GM12878 (cell line): ENCODE measurements at regions of chr6 and their contacts with region 1.

Region 1: GRCh38 chr6:166313255-166314070 is 5.3 kb upstream of the PRR18 start:
- DNase-seq: peak; percentile 44
- ATAC-seq: peak; percentile 97
- H3K4me3 ChIP-seq: no peak overlapping the region
- H3K27ac ChIP-seq: no peak overlapping the region
- H3K4me1 ChIP-seq: no peaks in the 10 kb centered on the region
- H3K27me3 ChIP-seq: no peaks in the 10 kb centered on the region; a peak in 1 of 4 replicates
- CTCF ChIP-seq: peak; percentile 90 to 91 (median 91)
- EP300 ChIP-seq: no peak
- POLR2A ChIP-seq: no peak
- RAD21 ChIP-seq: peak; percentile 91

Region 2: GRCh38 chr6:166192136-166192535 is 121.3 kb before region 1 on chr6:
- CTCF ChIA-PET with region 1: no interaction called
- POLR2A ChIA-PET with region 1: no interaction called
- RAD21 ChIA-PET with region 1: no interaction called
- SMC1A ChIA-PET with region 1: no interaction called
- in situ Hi-C with region 1: no loop called
- intact Hi-C with region 1: no loop called
- DNase-seq: no peak
- ATAC-seq: no peak
- H3K4me3 ChIP-seq: no peak overlapping the region
- H3K27ac ChIP-seq: no peak overlapping the region
- H3K4me1 ChIP-seq: no peaks in the 10 kb centered on the region
- H3K27me3 ChIP-seq: no peaks in the 10 kb centered on the region
- CTCF ChIP-seq: no peak
- EP300 ChIP-seq: no peak
- POLR2A ChIP-seq: no peak
- RAD21 ChIP-seq: no peak

Region 3: GRCh38 chr6:166281104-166281503 is 32.4 kb before region 1 on chr6:
- CTCF ChIA-PET with region 1: interaction called, 58 read pairs
- POLR2A ChIA-PET with region 1: interaction called, 8 read pairs
- RAD21 ChIA-PET with region 1: interaction called, 60 read pairs
- SMC1A ChIA-PET with region 1: interaction called, 29 read pairs
- in situ Hi-C with region 1: loop called (anchors 5 kb)
- intact Hi-C with region 1: loop called (anchors 1 kb)
- DNase-seq: no peak
- ATAC-seq: peak; percentile 67
- H3K4me3 ChIP-seq: no peak overlapping the region
- H3K27ac ChIP-seq: peak overlapping the region; percentile 48
- H3K4me1 ChIP-seq: peaks cover 38% of the 10 kb centered on the region
- H3K27me3 ChIP-seq: no peaks in the 10 kb centered on the region
- CTCF ChIP-seq: no peak
- EP300 ChIP-seq: no peak
- POLR2A ChIP-seq: no peak
- RAD21 ChIP-seq: no peak

Region 4: DNA sequence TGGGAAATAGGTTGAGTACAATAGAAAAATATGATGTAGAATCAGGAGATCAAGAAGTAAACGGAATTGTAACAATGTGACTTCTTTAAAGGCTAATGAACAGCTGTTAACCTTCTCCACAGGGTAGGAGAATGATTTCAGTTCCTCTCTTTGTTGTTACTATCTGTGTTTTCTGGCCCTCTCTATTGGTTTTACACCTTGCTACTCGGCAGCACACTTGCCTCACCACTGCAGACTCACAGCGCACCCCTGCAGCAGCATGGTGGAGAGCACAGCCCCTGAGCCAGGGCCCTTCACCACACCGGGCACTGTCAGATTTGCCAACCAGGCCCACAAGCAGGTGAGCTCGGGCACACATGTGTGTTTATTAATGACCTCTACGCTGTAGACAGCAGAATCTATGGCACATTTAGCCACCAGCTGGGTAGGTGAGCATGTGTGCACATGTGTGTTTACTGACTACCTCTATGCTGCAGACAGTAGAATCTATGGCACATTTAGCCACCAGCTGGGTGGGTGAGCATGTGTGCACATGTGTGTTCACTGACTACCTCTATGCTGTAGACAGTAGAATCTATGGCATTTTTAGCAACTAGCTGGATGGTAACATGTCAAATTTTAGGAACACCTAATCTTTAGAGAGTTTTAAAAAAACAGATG is 12.1 kb after region 1 on chr6:
- CTCF ChIA-PET with region 1: interaction called, 44 read pairs
- POLR2A ChIA-PET with region 1: interaction called, 7 read pairs
- RAD21 ChIA-PET with region 1: interaction called, 30 read pairs
- SMC1A ChIA-PET with region 1: interaction called, 26 read pairs
- in situ Hi-C with region 1: no loop called
- intact Hi-C with region 1: no loop called
- DNase-seq: peak; percentile 43
- ATAC-seq: peak; percentile 96
- H3K4me3 ChIP-seq: no peak overlapping the region
- H3K27ac ChIP-seq: peak overlapping the region; percentile 4; the same call in 1 of the 2 replicates
- H3K4me1 ChIP-seq: peaks cover 11% of the 10 kb centered on the region
- H3K27me3 ChIP-seq: no peaks in the 10 kb centered on the region
- CTCF ChIP-seq: no peak; a peak in 1 of 6 replicates
- EP300 ChIP-seq: peak; percentile 60 to 84; a peak in 3 of 4 replicates
- POLR2A ChIP-seq: no peak
- RAD21 ChIP-seq: no peak

Region 5: DNA sequence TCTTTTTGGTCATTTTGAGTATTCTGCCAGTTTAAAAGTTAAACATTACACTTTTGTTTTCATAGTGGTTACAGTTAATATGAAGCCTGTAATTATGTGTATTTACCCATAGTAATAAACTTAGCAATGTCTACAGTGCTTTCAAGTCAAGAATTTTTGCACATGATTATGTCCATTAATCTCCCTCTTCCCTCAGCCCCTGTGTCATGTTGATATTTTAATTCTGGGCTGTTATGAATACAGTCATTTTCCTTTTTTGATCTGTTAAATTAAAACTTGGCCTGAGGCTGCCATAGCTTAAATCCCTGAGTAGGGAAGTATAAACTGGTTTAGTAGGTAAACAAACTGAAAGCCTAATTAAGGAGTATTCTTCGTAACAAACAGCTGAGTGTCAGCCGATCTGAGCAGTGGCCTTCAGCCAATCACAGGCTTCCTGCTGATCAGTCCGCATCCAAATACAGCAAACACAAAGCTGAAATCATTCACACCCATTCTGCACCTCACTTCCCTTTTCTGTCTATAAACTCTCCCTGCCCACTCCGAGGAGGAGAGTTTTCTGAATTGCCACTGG is 38.3 kb after region 1 on chr6:
- CTCF ChIA-PET with region 1: interaction called, 7 read pairs
- POLR2A ChIA-PET with region 1: no interaction called
- RAD21 ChIA-PET with region 1: interaction called, 3 read pairs
- SMC1A ChIA-PET with region 1: interaction called, 10 read pairs
- in situ Hi-C with region 1: no loop called
- intact Hi-C with region 1: no loop called
- DNase-seq: peak; percentile 75
- ATAC-seq: peak; percentile 100
- H3K4me3 ChIP-seq: no peak overlapping the region
- H3K27ac ChIP-seq: no peak overlapping the region
- H3K4me1 ChIP-seq: peaks cover 4% of the 10 kb centered on the region
- H3K27me3 ChIP-seq: no peaks in the 10 kb centered on the region
- CTCF ChIP-seq: no peak
- EP300 ChIP-seq: 0 out of 4 replicates have a peak, but pooled peaks of 1 of the 2 experiments have one; percentile 29
- POLR2A ChIP-seq: no peak
- RAD21 ChIP-seq: no peak

Region 6: DNA sequence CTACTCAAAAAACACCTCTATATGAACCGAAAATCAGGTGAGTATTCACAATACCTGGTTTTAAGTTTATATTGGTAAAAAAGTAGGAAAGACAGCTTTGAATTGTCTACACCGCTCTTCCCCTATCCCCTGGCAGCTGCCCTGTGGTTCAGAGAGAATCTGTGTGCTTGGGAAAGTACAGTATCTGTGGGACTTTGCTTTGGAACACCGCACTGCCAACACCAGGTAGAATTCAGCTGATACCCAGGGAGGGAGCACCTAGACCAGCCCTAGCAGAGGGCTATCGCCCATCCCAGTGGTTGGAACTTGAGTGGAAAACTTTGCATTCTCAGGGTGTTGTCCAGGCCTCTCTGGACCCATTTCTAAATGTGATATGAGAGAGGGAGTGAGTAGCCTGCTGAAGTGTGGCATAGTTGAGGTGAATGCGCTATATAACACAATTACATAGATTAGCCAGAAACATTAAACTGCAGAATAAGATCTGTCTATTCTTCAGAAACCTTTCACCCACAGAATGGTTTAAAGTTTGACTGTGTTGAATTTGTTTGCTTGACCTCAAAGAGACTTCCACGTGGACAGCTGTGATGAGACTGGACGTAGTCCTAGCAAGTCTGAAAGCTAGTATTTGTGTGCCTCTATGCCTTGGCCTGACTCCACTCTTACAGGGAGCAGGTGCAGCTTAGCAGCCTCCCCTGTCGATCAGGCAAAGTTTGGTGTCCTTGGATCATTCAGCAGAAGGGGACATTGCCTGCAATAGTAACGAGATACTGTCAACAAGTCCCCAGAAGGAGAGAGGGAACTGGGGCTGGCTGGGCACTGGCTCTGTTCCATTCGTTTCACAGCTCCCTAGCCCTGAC is 80.8 kb after region 1 on chr6:
- CTCF ChIA-PET with region 1: interaction called, 317 read pairs
- POLR2A ChIA-PET with region 1: interaction called, 6 read pairs
- RAD21 ChIA-PET with region 1: interaction called, 165 read pairs
- SMC1A ChIA-PET with region 1: interaction called, 72 read pairs
- in situ Hi-C with region 1: no loop called
- intact Hi-C with region 1: no loop called
- DNase-seq: no peak
- ATAC-seq: 0 out of 3 replicates have a peak, but pooled peaks have one; percentile 24
- H3K4me3 ChIP-seq: no peak overlapping the region
- H3K27ac ChIP-seq: no peak overlapping the region
- H3K4me1 ChIP-seq: no peaks in the 10 kb centered on the region
- H3K27me3 ChIP-seq: no peaks in the 10 kb centered on the region
- CTCF ChIP-seq: no peak
- EP300 ChIP-seq: no peak
- POLR2A ChIP-seq: no peak
- RAD21 ChIP-seq: no peak